IMR-90 (cell line): ENCODE measurements at regions of chr10 and their contacts with region 1.

Region 1: DNA sequence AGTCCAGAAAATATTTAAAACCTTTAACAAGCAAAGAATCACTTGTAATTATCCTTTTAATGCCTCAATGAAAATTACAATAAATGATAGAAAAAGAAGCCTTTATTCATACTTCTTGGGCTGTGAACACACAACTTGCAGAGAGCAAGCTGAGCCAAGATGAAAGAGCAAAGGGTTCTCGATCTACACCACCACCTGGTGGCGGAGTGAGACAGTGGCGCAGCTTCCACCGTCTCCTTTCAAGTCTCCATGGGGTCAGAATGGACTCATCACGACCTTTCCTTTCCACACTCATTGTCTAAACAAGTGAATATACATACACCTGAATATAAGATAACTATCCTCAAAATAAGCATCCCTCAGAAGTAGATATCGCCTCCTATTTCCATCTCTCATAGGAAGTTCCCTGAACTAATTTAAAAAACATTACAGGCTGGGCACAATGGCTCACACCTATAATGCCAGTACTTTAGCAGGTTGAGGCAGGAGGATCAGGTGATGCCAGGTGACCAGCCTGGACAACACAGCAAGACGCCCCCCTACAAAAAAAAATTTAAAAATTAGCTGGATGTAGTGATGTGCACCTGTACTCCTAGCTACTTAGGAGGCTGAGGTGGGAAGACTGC is 40.7 kb downstream of the ATE1 start:
- DNase-seq: peak; percentile 69
- ATAC-seq: peak; percentile 97
- H3K4me3 ChIP-seq: no peak overlapping the region
- H3K27ac ChIP-seq: no peak overlapping the region
- H3K4me1 ChIP-seq: no peaks in the 10 kb centered on the region
- H3K27me3 ChIP-seq: no peaks in the 10 kb centered on the region
- CTCF ChIP-seq: peak; percentile 87
- POLR2A ChIP-seq: no peak
- RAD21 ChIP-seq: peak; percentile 79

Region 2: DNA sequence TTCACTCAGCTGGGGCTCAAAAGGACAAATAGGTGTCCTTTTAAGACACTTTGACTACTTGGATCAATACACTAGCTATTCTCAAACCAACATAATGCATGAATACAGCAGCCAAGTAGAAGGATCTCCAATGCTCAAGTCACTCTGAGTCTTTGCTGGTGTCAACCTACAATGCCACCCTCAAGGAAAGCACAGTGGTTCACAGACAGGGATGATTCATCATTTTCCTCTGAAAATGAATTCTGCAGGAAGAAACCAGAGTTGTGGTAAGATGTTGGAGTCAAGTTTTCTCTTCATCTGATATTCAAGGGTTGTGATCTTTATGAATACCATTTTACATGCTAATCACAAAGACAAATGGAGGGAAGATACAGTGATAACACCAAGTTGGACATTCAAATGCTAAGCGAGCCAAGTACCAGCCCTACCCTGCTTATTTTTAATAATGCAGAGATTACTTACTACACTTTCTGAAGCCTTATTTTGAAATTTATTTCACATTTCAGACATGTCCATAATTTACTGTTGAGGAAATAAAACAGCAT is 145.8 kb before region 1 on chr10:
- CTCF ChIA-PET with region 1: no interaction called
- POLR2A ChIA-PET with region 1: no interaction called
- dilution Hi-C with region 1: no loop called
- in situ Hi-C with region 1: no loop called
- intact Hi-C with region 1: loop called (anchors 2 kb)
- DNase-seq: peak; percentile 5
- ATAC-seq: no peak
- H3K4me3 ChIP-seq: no peak overlapping the region
- H3K27ac ChIP-seq: no peak overlapping the region
- H3K4me1 ChIP-seq: no peaks in the 10 kb centered on the region
- H3K27me3 ChIP-seq: peaks cover 3% of the 10 kb centered on the region
- CTCF ChIP-seq: no peak
- POLR2A ChIP-seq: no peak
- RAD21 ChIP-seq: no peak

Region 3: GRCh38 chr10:121900443-121901174 is 13.5 kb after region 1 on chr10:
- CTCF ChIA-PET with region 1: interaction called, 11 read pairs
- POLR2A ChIA-PET with region 1: no interaction called
- dilution Hi-C with region 1: no loop called
- in situ Hi-C with region 1: no loop called
- intact Hi-C with region 1: no loop called
- DNase-seq: peak; percentile 71
- ATAC-seq: peak; percentile 88
- H3K4me3 ChIP-seq: no peak overlapping the region
- H3K27ac ChIP-seq: no peak overlapping the region
- H3K4me1 ChIP-seq: no peaks in the 10 kb centered on the region
- H3K27me3 ChIP-seq: no peaks in the 10 kb centered on the region
- CTCF ChIP-seq: peak; percentile 68
- POLR2A ChIP-seq: no peak
- RAD21 ChIP-seq: peak; percentile 69